ENCODE measurements at regions of chr6 and their contacts with region 1.

Region 1: GRCh38 chr6:148947621-148948444 is 201.0 kb downstream of the UST start:
- DNase-seq: peak; percentile 79
- H3K4me3 ChIP-seq: no peak overlapping the region
- H3K27ac ChIP-seq: no peak overlapping the region
- H3K4me1 ChIP-seq: no peaks in the 10 kb centered on the region
- H3K27me3 ChIP-seq: no peaks in the 10 kb centered on the region
- CTCF ChIP-seq: peak; percentile 94

Region 2: DNA sequence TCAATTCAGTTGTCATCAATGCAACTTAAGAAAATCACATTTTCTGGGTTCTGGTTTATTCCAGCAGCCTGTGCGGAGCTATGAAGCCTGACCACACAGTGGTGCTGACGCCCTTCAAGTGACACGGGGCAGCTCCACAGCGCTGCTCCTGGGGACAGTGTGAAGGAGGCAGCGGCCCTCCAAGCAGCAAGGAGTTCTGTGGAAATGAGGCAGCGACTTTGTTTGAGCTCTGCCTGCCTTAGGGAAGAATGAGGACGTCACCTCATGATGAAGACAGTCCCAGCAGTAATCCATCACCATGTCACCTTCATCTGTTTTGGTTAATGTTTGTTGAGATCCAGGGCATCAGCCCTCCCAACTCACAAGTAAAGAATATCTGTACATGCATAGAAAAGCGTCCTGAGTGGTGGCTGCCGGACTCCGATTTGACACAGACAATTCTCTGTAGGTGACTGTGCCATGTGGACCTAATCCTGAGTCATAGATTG is 369.5 kb before region 1 on chr6:
- intact Hi-C with region 1: loop called (anchors 5 kb)
- DNase-seq: peak; percentile 73
- H3K4me3 ChIP-seq: no peak overlapping the region
- H3K27ac ChIP-seq: no peak overlapping the region
- H3K4me1 ChIP-seq: no peaks in the 10 kb centered on the region
- H3K27me3 ChIP-seq: peaks cover 5% of the 10 kb centered on the region
- CTCF ChIP-seq: peak; percentile 90

Region 3: GRCh38 chr6:148629181-148629580 is 318.7 kb before region 1 on chr6:
- intact Hi-C with region 1: no loop called
- DNase-seq: no peak
- H3K4me3 ChIP-seq: no peak overlapping the region
- H3K27ac ChIP-seq: no peak overlapping the region
- H3K4me1 ChIP-seq: peaks cover 4% of the 10 kb centered on the region
- H3K27me3 ChIP-seq: no peaks in the 10 kb centered on the region
- CTCF ChIP-seq: no peak

Region 4: DNA sequence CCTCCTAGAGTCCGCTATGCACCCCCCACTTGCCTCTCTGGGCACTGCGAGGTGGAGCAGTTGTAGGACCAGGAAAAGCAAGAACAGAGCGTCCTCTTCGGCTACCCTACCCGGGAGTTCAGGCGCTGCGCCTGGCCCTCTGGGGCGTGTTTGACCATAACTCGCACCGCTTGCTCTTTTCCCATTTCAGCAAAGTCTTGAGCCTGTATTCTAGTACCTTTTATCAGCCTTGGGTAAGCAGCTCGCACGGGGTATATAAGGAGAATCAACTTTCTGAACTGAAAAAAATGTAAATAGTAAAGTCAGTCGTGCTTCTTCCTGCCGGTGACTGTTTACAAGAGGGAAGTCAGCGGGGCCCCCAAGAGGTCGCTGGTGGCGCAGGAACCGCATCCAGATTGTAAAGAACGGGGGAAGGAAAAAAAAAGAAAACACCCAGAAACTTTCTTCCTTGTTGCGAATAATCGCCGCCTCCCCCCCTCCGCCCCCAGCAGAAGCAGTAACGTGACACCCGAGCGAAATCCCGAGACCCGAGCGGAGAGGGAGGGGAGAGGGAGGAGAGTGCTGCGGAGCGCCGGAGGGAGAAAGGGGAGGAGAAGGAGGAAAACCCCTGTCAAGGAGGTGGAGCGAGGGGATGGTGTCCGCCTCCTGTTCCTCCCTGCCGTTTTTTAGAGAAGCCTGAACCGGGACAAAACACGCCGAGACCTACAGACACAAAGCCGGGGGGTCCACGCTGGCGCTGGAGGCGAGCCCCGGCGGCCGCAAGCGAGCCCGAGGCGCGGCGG is 201.3 kb before region 1 on chr6 and contains the start of gene UST:
- intact Hi-C with region 1: loop called (anchors 2 kb)
- DNase-seq: peak; percentile 85
- H3K4me3 ChIP-seq: peak within 1 kb of the TSS; percentile 86
- H3K27ac ChIP-seq: peak within 1 kb of the TSS; percentile 89
- H3K4me1 ChIP-seq: peaks cover 22% of the 10 kb centered on the region
- H3K27me3 ChIP-seq: peaks cover 19% of the 10 kb centered on the region
- CTCF ChIP-seq: peak; percentile 49
- total RNA-seq, gene UST: 3.3 TPM

Region 5: DNA sequence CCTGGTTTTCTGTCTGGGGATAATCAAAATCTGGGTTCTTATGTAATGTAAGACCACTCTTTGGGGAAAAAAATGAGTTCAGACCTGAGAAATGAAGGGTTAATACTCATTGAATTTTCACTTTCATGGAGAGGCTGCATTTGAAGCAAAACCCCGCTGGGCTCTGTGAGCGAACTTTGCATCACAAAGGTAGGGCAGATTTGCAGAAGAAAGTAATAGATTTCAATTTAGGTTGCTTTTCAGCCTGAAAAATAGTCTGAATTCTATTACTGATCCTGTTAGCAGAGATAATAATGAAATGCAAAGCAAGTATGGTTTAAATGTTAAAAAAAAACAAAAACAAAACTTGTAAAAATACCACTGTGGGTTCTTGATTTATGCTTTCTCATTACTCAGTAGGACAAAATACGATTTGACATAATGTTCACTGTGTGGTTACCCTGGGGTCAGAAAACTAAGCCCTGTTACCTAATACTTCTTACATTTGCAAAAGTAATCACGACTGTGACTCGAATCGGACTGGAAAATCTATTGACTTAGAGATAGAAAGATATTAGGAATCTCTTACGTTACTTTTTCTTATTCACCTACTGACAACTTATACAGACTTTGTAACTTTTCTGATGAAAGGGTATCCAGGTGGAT is 128.8 kb before region 1 on chr6:
- intact Hi-C with region 1: no loop called
- DNase-seq: no peak
- H3K4me3 ChIP-seq: no peak overlapping the region
- H3K27ac ChIP-seq: no peak overlapping the region
- H3K4me1 ChIP-seq: no peaks in the 10 kb centered on the region
- H3K27me3 ChIP-seq: no peaks in the 10 kb centered on the region
- CTCF ChIP-seq: no peak

Region 6: GRCh38 chr6:149043476-149044130 is 95.8 kb after region 1 on chr6:
- intact Hi-C with region 1: no loop called
- DNase-seq: no peak
- H3K4me3 ChIP-seq: no peak overlapping the region
- H3K27ac ChIP-seq: no peak overlapping the region
- H3K4me1 ChIP-seq: peaks cover 8% of the 10 kb centered on the region
- H3K27me3 ChIP-seq: no peaks in the 10 kb centered on the region
- CTCF ChIP-seq: peak; percentile 26

Region 7: GRCh38 chr6:149089510-149089909 is 141.7 kb after region 1 on chr6:
- intact Hi-C with region 1: no loop called
- DNase-seq: no peak
- H3K4me3 ChIP-seq: no peak overlapping the region
- H3K27ac ChIP-seq: no peak overlapping the region
- H3K4me1 ChIP-seq: no peaks in the 10 kb centered on the region
- H3K27me3 ChIP-seq: peaks cover 49% of the 10 kb centered on the region
- CTCF ChIP-seq: no peak